MCF 10A (cell line): ENCODE measurements at regions of chr19 and their contacts with region 1.

Region 1: DNA sequence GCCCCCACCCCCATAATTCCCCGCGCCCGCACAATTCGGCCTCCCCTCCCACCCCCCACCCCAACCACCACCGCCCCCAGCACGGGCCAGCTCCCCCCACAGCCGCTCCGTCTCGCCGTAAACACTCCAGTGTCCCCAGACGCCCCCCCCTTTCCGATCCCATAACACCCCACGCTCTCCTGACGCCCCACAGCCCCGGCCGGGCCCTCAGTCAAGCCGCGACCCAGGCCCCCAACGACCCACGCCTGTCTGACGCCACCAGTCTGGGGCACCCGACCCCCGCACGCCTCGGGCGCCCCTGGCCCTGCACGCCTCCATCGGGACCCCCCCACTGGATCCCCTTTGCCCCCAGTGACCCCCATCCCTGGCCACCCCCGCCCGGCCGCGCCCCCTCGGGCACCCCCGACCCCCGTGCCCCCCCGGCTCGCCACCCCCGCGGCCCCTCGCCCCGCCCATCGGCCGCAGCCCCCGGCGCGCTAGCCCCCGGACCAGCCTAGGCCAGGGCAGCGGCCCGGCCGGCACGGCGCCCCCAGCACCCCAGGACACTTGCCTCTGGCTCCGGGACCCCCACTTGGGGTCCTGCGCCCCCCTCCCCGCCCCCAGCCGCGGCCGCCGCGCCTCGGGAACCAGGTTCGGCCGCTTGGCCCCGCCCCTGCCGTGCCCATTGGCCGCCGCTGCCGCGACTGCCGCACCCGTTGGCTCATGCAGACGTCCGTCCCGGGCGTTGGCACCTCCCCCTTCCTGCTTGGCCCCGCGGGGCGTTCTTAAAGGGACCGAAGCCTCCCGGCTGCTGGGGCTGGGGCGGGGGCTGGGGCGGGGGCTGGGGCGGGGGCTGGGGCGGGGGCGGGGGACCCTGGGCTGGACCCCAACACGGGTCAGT is at the start of gene FKBP8:
- DNase-seq: peak; percentile 87
- H3K4me3 Mint-ChIP-seq: peak within 1 kb of the TSS; percentile 87
- H3K27ac Mint-ChIP-seq: peak within 1 kb of the TSS; percentile 94
- H3K4me1 Mint-ChIP-seq: peaks cover 8% of the 10 kb centered on the region
- H3K27me3 Mint-ChIP-seq: no peaks in the 10 kb centered on the region
- CTCF ChIP-seq: no peak
- total RNA-seq, gene FKBP8: 142 and 154 TPM in 2 replicates

Region 2: GRCh38 chr19:18251587-18252369 is 291.4 kb before region 1 on chr19:
- CTCF ChIA-PET with region 1: no interaction called
- POLR2A ChIA-PET with region 1: no interaction called
- intact Hi-C with region 1: no loop called
- DNase-seq: peak; percentile 76
- H3K4me3 Mint-ChIP-seq: no peak overlapping the region
- H3K27ac Mint-ChIP-seq: no peak overlapping the region
- H3K4me1 Mint-ChIP-seq: no peaks in the 10 kb centered on the region
- H3K27me3 Mint-ChIP-seq: no peaks in the 10 kb centered on the region
- CTCF ChIP-seq: peak; percentile 89

Region 3: GRCh38 chr19:18428787-18429674 is 114.1 kb before region 1 on chr19:
- CTCF ChIA-PET with region 1: no interaction called
- POLR2A ChIA-PET with region 1: no interaction called
- intact Hi-C with region 1: no loop called
- DNase-seq: no peak
- H3K4me3 Mint-ChIP-seq: no peak overlapping the region
- H3K27ac Mint-ChIP-seq: no peak overlapping the region
- H3K4me1 Mint-ChIP-seq: peaks cover 8% of the 10 kb centered on the region
- H3K27me3 Mint-ChIP-seq: no peaks in the 10 kb centered on the region
- CTCF ChIP-seq: no peak

Region 4: GRCh38 chr19:18557474-18558201 is 14.5 kb after region 1 on chr19 and contains the start of gene KXD1:
- CTCF ChIA-PET with region 1: interaction called, 5 read pairs
- POLR2A ChIA-PET with region 1: interaction called, 38 read pairs
- intact Hi-C with region 1: no loop called
- DNase-seq: peak; percentile 99
- H3K4me3 Mint-ChIP-seq: peak within 1 kb of the TSS; percentile 74
- H3K27ac Mint-ChIP-seq: peak within 1 kb of the TSS; percentile 86
- H3K4me1 Mint-ChIP-seq: peaks cover 11% of the 10 kb centered on the region
- H3K27me3 Mint-ChIP-seq: no peaks in the 10 kb centered on the region
- CTCF ChIP-seq: no peak
- total RNA-seq, gene KXD1: 120 and 126 TPM in 2 replicates